Dendritic cell treated with granulocyte-macrophage colony-stimulating factor and Interleukin-4, amounts not matched to agents 40 ng/mL and 50 ng/mL, for 4 days (primary cell): ENCODE measurements at regions of chr1 and their contacts with region 1.

Region 1: DNA sequence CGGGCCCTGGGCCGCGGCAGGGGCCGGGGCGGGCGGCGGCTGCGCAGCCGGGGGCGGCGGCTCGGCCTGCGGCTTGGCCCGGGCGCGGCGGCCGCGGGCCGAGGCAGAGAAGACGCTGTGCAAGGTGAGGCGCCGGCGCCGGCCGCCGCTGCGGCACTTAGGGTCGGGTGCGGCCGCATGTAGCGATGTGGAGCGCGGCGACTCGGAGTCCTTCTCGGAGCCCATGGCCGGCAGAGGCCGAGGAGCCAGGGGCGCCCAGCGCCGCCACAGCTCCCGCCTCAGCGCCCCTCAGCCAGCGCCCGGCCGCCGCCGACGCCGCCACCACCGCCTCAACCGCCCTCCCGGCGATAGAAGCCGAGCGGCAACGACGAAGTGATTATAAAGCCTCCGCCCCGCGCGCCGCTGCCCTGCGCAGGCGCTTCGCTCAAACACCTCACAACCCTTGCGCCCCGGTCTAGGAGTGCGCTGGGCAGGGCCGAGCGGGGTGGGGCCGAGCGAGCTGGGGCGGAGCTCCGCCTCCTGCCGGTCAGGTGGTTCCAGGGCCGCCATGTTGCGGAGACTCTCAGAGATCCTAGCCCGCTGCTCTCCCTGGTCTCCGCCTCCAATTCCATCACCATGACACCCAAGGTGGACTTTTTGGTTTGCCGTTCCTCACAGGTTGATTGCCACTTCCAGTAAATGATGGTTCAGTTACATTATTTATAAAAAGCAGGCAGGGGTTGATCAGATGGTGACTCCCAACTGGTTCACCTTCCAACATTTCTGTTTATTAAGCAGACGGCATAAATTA is at the start of gene RNF19B:
- H3K4me3 Mint-ChIP-seq: peak within 1 kb of the TSS; percentile 93
- H3K27ac Mint-ChIP-seq: peak within 1 kb of the TSS; percentile 88
- H3K4me1 Mint-ChIP-seq: peaks cover 55% of the 10 kb centered on the region
- H3K27me3 Mint-ChIP-seq: no peaks in the 10 kb centered on the region

Region 2: GRCh38 chr1:32893198-32894018 is 71.2 kb before region 1 on chr1:
- intact Hi-C with region 1: no loop called
- H3K4me3 Mint-ChIP-seq: peak overlapping the region; percentile 68
- H3K27ac Mint-ChIP-seq: no peak overlapping the region
- H3K4me1 Mint-ChIP-seq: peaks cover 16% of the 10 kb centered on the region
- H3K27me3 Mint-ChIP-seq: peaks cover 92% of the 10 kb centered on the region

Region 3: GRCh38 chr1:32992489-32993323 is 28.1 kb after region 1 on chr1:
- intact Hi-C with region 1: loop called (anchors 2 kb)
- H3K4me3 Mint-ChIP-seq: peak overlapping the region; percentile 55
- H3K27ac Mint-ChIP-seq: peak overlapping the region; percentile 99
- H3K4me1 Mint-ChIP-seq: peaks cover 95% of the 10 kb centered on the region
- H3K27me3 Mint-ChIP-seq: no peaks in the 10 kb centered on the region

Region 4: DNA sequence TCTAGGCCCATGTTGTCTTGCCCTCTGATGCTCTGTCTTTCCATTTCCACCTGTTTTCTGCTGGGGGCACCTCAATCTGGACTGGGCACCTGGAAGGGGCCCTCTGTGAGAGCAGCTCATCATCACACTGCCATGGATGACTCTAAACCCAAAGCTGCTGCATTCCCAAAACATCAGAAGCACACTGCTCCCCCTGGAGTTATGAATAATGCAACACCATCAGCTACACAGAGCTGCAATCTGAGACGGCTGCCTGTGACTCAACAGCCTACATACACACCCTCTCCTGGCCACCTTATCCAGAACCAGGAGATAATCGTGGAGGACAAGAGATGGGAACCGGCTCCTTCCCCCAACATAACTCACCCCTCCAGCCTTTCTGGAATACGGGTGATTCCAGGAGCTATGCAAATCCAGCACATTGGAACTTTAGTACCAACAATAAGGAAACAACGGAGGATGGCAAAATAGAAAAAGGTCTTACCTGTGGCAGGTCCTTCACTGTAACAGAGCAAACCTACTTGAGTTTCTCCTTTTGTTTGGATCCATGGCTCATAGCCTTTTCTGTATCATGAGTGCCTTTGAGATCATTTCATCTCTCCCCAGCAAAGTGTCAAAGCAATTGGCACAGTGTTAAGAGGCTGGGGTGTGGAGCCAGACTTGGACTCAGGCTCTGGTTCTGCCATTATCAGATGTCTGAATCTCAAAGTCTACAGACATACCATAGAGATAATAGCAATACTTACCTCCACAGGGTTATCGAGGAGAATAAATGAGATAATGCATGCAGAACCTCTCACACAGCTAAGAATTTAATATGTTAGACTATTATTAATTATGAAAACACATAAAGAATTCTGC is 42.8 kb after region 1 on chr1:
- intact Hi-C with region 1: loop called (anchors 5 kb)
- H3K4me3 Mint-ChIP-seq: peak overlapping the region; percentile 24
- H3K27ac Mint-ChIP-seq: peak overlapping the region; percentile 81
- H3K4me1 Mint-ChIP-seq: peaks cover 87% of the 10 kb centered on the region
- H3K27me3 Mint-ChIP-seq: no peaks in the 10 kb centered on the region

Region 5: DNA sequence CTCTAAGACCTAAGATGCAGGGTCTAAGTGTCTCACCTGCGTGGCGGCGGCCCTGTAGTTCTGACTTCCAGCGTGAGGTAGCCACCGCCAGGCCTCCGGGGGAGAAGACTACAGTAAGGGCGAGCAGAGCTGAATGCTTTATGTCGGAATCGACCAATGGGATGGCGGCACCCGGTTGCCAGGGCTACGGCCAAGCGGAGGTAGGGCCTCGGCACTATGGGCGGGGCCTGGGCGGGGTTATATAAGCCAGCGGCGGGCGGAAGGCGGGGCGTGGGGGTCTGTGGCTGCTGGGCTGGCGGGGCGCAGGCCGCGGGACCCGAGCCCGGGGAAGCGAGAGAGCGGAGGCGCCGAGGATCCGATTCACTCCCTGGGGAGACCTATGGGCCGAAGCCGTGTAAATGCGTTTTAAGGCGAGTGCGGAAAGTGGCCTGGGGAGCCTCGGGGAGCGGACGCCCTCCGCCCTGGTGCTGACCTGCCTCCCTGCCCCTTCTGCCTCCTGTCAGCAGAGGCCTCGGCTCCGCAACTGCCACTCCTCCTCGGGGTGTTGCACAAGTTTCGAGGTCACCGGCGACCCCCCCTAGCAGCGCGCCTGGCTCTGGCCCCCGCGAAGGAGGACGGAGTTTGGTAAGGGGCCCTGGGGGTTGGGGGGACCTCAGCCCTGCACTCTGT is 116.4 kb after region 1 on chr1 and contains the start of gene AZIN2:
- intact Hi-C with region 1: loop called (anchors 10 kb)
- H3K4me3 Mint-ChIP-seq: peak within 1 kb of the TSS; percentile 74
- H3K27ac Mint-ChIP-seq: peak within 1 kb of the TSS; percentile 50
- H3K4me1 Mint-ChIP-seq: peaks cover 27% of the 10 kb centered on the region
- H3K27me3 Mint-ChIP-seq: peaks cover 58% of the 10 kb centered on the region

Region 6: DNA sequence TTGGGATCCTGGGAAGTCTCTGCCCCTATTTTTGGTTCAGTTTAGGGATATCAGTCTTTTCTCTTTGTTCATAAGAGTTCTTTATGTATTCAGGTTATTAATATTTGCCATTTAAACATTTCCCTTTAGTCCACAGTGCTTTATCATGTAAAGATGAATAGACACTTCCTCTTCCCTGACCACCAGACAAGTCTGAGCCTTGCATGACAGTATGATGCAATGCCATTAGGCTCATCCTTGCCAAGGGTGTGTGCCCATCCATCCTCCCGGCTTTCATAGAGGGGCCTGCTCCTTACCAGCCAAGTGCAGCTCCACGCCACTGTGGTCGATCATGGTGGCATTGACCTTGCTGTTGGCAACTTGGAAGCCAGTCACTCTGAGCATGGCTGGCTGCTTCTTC is 559.9 kb after region 1 on chr1:
- intact Hi-C with region 1: no loop called
- H3K4me3 Mint-ChIP-seq: no peak overlapping the region
- H3K27ac Mint-ChIP-seq: no peak overlapping the region
- H3K4me1 Mint-ChIP-seq: no peaks in the 10 kb centered on the region
- H3K27me3 Mint-ChIP-seq: peaks cover 9% of the 10 kb centered on the region